Calu3 (cell line): ENCODE measurements at regions of chr16 and their contacts with region 1.

Region 1: DNA sequence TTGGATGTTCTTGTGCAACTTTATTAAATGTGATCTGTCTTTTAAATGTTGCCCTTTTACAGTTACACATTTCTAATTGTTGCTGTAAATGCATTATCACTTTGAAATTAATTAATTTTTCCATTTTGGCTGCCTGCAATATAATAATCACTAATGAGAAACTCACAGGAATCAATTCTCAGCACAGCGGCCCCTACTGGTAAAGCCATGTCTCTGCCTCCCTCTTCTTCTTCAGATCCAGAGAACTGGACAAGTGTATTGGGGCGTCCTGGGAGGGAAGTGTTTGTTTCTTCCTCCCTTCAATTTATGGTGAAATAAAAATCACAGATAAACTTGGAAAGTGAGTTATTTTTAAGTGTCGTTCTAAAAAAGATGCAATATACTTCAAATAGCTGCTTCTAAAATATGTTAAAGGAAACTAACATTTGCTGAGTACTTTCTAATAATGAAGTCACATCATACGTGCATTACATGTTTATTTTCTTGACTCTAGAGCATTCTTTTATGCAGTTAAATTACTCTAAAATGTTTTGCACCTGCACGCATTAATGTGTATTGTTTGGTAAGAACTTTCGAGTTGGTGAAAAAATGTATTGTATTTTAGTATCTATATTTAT is 338.0 kb downstream of the WWOX start:
- DNase-seq: peak; percentile 72
- H3K4me3 Mint-ChIP-seq: no peak overlapping the region
- H3K27ac Mint-ChIP-seq: no peak overlapping the region
- H3K4me1 Mint-ChIP-seq: no peaks in the 10 kb centered on the region
- H3K27me3 Mint-ChIP-seq: no peaks in the 10 kb centered on the region
- CTCF ChIP-seq: peak; percentile 69

Region 2: DNA sequence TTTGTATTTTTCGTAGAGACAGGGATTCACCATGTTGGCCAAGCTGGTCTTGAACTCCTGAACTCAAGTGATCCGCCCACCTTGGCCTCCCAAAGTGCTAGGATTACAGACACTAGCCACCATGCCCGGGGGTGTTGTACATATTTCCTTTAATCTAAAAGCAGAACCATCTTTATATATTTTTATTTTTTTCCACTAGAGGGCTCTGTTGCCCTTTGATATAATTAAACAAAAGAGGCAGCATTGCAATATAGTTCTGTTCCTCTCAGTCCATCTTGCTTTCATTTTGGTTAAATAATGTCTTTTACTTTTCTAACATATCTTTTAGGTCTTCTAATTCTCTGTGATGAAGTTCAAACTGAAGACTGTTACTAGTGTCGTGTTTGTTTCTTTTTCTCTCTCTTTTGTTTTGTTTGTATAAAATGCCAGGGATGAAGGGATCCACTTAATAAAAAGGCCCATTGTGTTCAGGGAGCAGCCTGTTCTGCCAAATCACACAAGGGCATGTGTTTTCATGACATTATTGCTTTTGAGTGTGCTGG is 314.6 kb before region 1 on chr16:
- CTCF ChIA-PET with region 1: no interaction called
- intact Hi-C with region 1: loop called (anchors 2 kb)
- DNase-seq: peak; percentile 32
- H3K4me3 Mint-ChIP-seq: peak overlapping the region; percentile 39
- H3K27ac Mint-ChIP-seq: peak overlapping the region; percentile 46
- H3K4me1 Mint-ChIP-seq: peaks cover 8% of the 10 kb centered on the region
- H3K27me3 Mint-ChIP-seq: no peaks in the 10 kb centered on the region
- CTCF ChIP-seq: peak; percentile 60

Region 3: GRCh38 chr16:78227855-78228254 is 209.6 kb before region 1 on chr16:
- CTCF ChIA-PET with region 1: no interaction called
- intact Hi-C with region 1: loop called (anchors 5 kb)
- DNase-seq: peak; percentile 35
- H3K4me3 Mint-ChIP-seq: no peak overlapping the region
- H3K27ac Mint-ChIP-seq: no peak overlapping the region
- H3K4me1 Mint-ChIP-seq: no peaks in the 10 kb centered on the region
- H3K27me3 Mint-ChIP-seq: no peaks in the 10 kb centered on the region
- CTCF ChIP-seq: peak; percentile 46

Region 4: GRCh38 chr16:78240462-78241222 is 196.8 kb before region 1 on chr16:
- CTCF ChIA-PET with region 1: no interaction called
- intact Hi-C with region 1: loop called (anchors 2 kb)
- DNase-seq: peak; percentile 75
- H3K4me3 Mint-ChIP-seq: peak overlapping the region; percentile 1
- H3K27ac Mint-ChIP-seq: peak overlapping the region; percentile 16
- H3K4me1 Mint-ChIP-seq: peaks cover 57% of the 10 kb centered on the region
- H3K27me3 Mint-ChIP-seq: no peaks in the 10 kb centered on the region
- CTCF ChIP-seq: no peak